ENCODE measurements at regions of chr17 and their contacts with region 1.

Region 1: DNA sequence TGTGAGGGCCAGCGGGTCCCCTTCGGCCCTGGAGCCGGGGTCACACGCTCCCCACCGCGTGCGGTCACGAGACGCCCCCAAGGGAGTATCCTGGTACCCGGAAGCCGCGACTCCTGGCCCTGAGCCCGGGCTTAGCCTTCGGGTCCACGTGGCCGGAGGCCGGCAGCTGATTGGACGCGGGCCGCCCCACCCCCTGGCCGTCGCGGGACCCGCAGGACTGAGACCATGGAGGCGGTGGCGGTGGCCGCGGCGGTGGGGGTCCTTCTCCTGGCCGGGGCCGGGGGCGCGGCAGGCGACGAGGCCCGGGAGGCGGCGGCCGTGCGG is at the start of gene NAGLU:
- DNase-seq: peak; percentile 91
- ATAC-seq: peak; percentile 87
- H3K4me3 Mint-ChIP-seq: peak within 1 kb of the TSS; percentile 88
- H3K27ac Mint-ChIP-seq: peak within 1 kb of the TSS; percentile 79
- H3K4me1 Mint-ChIP-seq: peaks cover 37% of the 10 kb centered on the region
- H3K27me3 Mint-ChIP-seq: peaks cover 2% of the 10 kb centered on the region
- total RNA-seq, gene NAGLU: 22.9 to 23.9 TPM

Region 2: GRCh38 chr17:42408061-42408460 is 127.9 kb before region 1 on chr17:
- POLR2A ChIA-PET with region 1: no interaction called
- DNase-seq: no peak
- ATAC-seq: no peak
- H3K4me3 Mint-ChIP-seq: no peak overlapping the region
- H3K27ac Mint-ChIP-seq: no peak overlapping the region
- H3K4me1 Mint-ChIP-seq: peaks cover 11% of the 10 kb centered on the region
- H3K27me3 Mint-ChIP-seq: no peaks in the 10 kb centered on the region

Region 3: DNA sequence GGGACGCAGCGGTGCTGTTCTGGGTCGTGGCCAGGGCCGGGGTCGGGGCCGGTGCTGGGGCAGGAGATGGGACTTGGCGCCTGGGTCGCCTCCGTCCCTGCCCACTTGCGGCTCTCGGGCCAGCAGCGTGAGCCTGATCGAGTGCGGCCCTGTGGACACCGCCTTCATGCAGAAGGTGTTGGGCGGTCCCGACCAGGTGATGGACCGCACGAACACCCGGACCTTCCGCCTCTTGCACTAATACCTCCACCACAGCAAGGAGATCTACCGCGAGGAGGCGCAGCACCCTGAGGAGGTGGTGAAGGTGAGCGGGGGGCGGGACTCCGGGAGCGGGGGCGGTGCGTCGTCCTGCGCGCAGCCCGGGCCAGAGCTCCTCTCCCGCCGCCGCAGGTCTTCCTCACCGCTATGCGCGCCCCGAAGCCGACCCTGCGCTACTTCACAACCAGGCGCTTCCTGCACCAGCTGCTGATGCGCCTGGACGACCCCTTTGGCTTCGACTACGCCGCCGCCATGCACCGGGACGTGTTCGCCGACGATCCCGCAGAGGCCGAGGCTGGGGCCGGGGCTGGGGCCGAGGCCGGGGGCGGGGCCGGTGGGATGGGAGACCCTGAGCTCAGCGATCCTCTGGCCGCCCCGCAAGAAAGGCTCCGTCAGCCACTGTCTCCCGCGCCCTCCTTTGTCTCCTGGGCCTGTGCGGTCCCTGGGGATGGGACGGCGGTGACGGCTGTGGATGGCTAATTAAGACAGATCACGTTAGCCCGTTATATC is 12.2 kb after region 1 on chr17:
- POLR2A ChIA-PET with region 1: interaction called, 19 read pairs
- DNase-seq: peak; percentile 84
- ATAC-seq: peak; percentile 88
- H3K4me3 Mint-ChIP-seq: peak overlapping the region; percentile 48
- H3K27ac Mint-ChIP-seq: peak overlapping the region; percentile 38
- H3K4me1 Mint-ChIP-seq: peaks cover 11% of the 10 kb centered on the region
- H3K27me3 Mint-ChIP-seq: no peaks in the 10 kb centered on the region